HepG2 (cell line): ENCODE measurements at regions of chr4 and their contacts with region 1.

Region 1: DNA sequence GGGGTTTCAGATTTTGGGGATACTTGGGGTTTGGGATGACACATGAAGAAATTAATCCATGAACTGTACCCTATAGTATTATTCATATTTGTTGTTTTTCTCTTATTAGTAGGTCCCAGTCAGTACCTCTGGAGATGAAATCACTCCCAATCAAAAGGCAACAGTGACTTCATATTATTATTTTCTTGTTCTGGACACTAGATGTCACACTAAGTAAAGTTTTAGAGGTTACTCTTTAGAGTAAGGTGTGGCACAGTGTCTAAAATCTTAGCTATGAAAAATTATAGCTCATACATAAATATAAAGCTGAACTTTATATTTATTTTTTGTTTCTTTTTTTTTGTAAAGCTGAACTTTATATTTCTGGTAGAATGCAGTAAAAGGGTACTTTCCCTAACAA is 35.1 kb downstream of the FAM114A1 start:
- DNase-seq: peak; percentile 27
- ATAC-seq: no peak
- H3K4me3 ChIP-seq: no peak overlapping the region
- H3K27ac ChIP-seq: no peak overlapping the region
- H3K4me1 ChIP-seq: peaks cover 43% of the 10 kb centered on the region
- H3K27me3 ChIP-seq: no peaks in the 10 kb centered on the region
- CTCF ChIP-seq: peak; percentile 49
- EP300 ChIP-seq: no peak
- POLR2A ChIP-seq: no peak
- RAD21 ChIP-seq: no peak

Region 2: DNA sequence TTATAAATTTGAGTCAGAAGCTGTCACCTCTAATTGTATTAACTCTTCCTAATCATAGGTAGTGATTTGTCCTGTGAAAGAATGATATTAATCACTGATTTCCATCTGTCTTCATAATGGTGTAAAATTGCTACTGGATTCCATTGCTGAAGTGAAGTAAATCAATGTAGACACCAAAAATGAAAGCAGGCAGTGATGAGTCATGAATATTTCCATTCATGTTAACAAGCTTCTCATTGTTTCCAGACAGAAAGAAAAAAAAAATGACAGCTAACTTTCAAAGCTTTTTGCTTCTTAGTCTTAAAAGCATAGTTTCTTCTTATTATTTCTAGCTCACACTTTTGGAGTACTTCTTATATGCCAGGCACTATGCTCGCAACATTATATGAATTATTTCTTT is 13.6 kb before region 1 on chr4:
- CTCF ChIA-PET with region 1: no interaction called
- POLR2A ChIA-PET with region 1: interaction called, 10 read pairs
- in situ Hi-C with region 1: no loop called
- intact Hi-C with region 1: no loop called
- DNase-seq: peak; percentile 74
- ATAC-seq: no peak
- H3K4me3 ChIP-seq: no peak overlapping the region
- H3K27ac ChIP-seq: peak overlapping the region; percentile 32
- H3K4me1 ChIP-seq: peaks cover 48% of the 10 kb centered on the region
- H3K27me3 ChIP-seq: no peaks in the 10 kb centered on the region
- CTCF ChIP-seq: no peak
- EP300 ChIP-seq: no peak
- POLR2A ChIP-seq: no peak
- RAD21 ChIP-seq: no peak

Region 3: DNA sequence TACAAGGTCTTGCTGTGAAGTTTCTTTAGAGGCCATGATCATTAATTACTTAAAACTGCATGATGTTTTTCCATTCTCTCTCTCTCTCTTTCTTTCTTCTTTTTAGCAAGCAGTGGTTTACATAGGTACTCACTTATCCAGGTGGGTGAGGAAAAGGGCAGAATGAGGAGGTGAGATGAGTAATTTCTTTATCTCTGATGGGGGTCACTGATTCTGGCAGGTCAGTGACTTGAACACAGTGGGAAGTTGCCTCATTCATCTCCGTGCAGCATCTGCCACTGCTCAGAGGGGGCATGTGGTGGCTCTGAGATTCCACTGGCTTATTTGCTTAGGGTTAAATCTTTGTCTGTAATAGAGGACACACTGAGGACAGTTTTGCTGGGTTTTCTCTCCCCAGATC is 27.5 kb after region 1 on chr4:
- CTCF ChIA-PET with region 1: no interaction called
- POLR2A ChIA-PET with region 1: no interaction called
- in situ Hi-C with region 1: no loop called
- intact Hi-C with region 1: no loop called
- DNase-seq: no peak
- ATAC-seq: peak; percentile 82
- H3K4me3 ChIP-seq: no peak overlapping the region
- H3K27ac ChIP-seq: no peak overlapping the region
- H3K4me1 ChIP-seq: peaks cover 15% of the 10 kb centered on the region
- H3K27me3 ChIP-seq: no peaks in the 10 kb centered on the region
- CTCF ChIP-seq: no peak
- EP300 ChIP-seq: no peak
- POLR2A ChIP-seq: no peak
- RAD21 ChIP-seq: no peak

Region 4: GRCh38 chr4:38993694-38994093 is 91.0 kb after region 1 on chr4:
- CTCF ChIA-PET with region 1: no interaction called
- POLR2A ChIA-PET with region 1: interaction called, 4 read pairs
- in situ Hi-C with region 1: no loop called
- intact Hi-C with region 1: loop called (anchors 2 kb)
- DNase-seq: peak; percentile 45
- ATAC-seq: peak; percentile 91
- H3K4me3 ChIP-seq: no peak overlapping the region
- H3K27ac ChIP-seq: no peak overlapping the region
- H3K4me1 ChIP-seq: no peaks in the 10 kb centered on the region
- H3K27me3 ChIP-seq: no peaks in the 10 kb centered on the region
- CTCF ChIP-seq: peak; percentile 35
- EP300 ChIP-seq: no peak
- POLR2A ChIP-seq: no peak
- RAD21 ChIP-seq: no peak

Region 5: DNA sequence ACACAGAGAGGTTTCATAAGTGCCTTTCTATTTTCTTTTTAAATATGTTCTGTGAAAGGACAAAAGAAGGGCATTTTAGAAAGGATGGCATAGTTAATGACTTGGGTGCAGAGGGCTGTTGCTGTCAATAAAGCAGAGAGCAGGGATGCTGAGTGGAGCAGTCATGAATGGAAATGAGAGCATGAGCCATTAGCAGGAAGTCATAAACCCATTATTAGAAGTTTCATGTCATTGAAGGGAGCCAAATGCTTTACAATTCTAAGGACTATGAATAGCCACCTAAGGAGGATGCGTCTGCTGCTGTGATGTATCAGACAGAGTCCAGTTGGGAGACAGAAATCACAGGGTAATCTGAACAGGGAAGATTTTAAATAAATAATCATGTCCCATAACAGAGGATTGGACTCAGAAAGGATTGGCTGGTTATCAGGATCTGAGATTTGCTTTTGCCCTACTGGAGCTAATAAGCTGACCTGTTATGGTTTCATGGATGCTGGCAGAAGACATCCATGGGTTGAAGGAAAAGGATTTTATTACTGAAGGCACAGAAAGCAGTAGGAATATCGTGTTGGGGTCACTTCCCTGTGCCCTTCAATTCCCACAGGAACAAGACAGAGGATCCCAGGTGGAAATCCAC is 232.1 kb after region 1 on chr4:
- CTCF ChIA-PET with region 1: interaction called, 11 read pairs
- POLR2A ChIA-PET with region 1: interaction called, 6 read pairs
- in situ Hi-C with region 1: loop called (anchors 5 kb)
- intact Hi-C with region 1: loop called (anchors 1 kb)
- DNase-seq: no peak
- ATAC-seq: peak; percentile 20
- H3K4me3 ChIP-seq: peak overlapping the region in 2 of 3 experiments; percentile 1 to 20; a peak in 2 of 6 replicates
- H3K27ac ChIP-seq: no peak overlapping the region
- H3K4me1 ChIP-seq: peaks cover 11% of the 10 kb centered on the region
- H3K27me3 ChIP-seq: no peaks in the 10 kb centered on the region
- CTCF ChIP-seq: no peak
- EP300 ChIP-seq: no peak
- POLR2A ChIP-seq: no peak
- RAD21 ChIP-seq: no peak